Right cardiac atrium (tissue), 5 donors: ENCODE measurements at regions of chr2 and their contacts with region 1.

Region 1: GRCh38 chr2:16756831-16757644 is 91.4 kb upstream of the CYRIA start:
- DNase-seq: peak; percentile 80 to 90 (median 87)
- ATAC-seq: peak; percentile 90 to 94
- H3K4me3 ChIP-seq: no peak overlapping the region
- H3K27ac ChIP-seq: no peak overlapping the region
- H3K4me1 ChIP-seq: no peaks in the 10 kb centered on the region
- H3K27me3 ChIP-seq: no peaks in the 10 kb centered on the region

Region 2: GRCh38 chr2:16553226-16553625 is 203.8 kb before region 1 on chr2:
- intact Hi-C with region 1: loop called (anchors 5 to 10 kb)
- DNase-seq: peak in 1 of 3 donors; percentile 51
- ATAC-seq: peak in 1 of 2 donors; percentile 36
- H3K4me3 ChIP-seq: no peak overlapping the region
- H3K27ac ChIP-seq: no peak overlapping the region
- H3K4me1 ChIP-seq: no peaks in the 10 kb centered on the region
- H3K27me3 ChIP-seq: no peaks in the 10 kb centered on the region

Region 3: GRCh38 chr2:16617282-16618261 is 139.5 kb before region 1 on chr2:
- intact Hi-C with region 1: loop called (anchors 2 to 5 kb)
- DNase-seq: peak in 1 of 3 donors; percentile 34
- ATAC-seq: peak in 1 of 2 donors; percentile 18
- H3K4me3 ChIP-seq: no peak overlapping the region
- H3K27ac ChIP-seq: no peak overlapping the region
- H3K4me1 ChIP-seq: peaks cover 2% of the 10 kb centered on the region
- H3K27me3 ChIP-seq: no peaks in the 10 kb centered on the region